Heart right ventricle (tissue), 16 donors: ENCODE measurements at regions of chr6 and their contacts with region 1.

Region 1: DNA sequence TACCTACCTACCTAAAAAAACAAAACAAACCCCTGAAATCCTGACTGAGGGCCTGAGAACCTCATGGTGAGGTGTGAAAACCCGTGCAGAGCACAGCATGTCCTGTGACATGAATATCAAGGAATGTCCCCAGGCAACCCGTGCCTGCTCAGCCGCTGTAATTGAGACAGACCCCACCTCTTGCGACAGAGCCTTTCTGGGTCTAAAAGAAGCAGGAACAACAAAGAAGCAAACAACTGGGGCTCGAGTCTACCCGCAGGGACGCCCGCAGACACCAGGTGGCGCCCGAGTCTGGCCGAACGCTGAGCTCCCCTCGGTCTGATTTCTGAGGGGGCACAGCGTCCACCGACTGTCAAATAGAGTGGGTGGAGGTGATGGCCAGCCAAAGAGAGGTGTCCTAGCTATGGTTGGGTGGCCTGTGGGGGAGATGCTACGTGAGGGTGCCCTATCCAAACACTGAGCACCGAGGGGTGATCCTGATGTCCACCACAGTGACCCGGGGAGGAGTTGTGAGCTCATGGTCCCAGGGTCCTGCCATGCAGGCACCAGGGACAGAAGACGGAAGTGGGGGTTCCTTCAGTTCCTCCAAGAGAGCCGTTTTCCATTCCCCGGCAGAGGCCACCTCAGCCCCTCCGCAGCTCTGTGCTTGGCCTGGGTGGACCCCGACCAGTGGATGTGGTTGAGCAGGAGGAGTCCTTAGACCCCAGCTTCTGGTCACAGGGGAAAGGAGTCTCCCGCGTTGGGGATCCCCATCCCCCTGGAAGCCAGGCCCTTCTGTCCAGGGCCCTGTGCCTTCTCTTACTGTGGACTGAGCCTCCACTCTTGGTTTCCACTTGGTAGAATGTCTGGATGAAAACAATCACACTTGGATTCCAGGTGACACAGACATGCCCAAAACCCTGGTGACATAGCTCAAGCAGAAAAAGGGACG is 268.2 kb downstream of the CDC5L start:
- DNase-seq: peak; percentile 60 to 74
- ATAC-seq: peak; percentile 54 to 87 (median 74)
- H3K4me3 ChIP-seq: no peak overlapping the region
- H3K27ac ChIP-seq: peak overlapping the region in 1 of 10 donors; percentile 43
- H3K4me1 ChIP-seq: peaks cover 0 to 8% (median 3%) of the 10 kb centered on the region in 9 donors
- H3K27me3 ChIP-seq: peaks cover 0 to 9% (median 0%) of the 10 kb centered on the region in 7 donors
- CTCF ChIP-seq: peak; percentile 76 to 98 (median 96)

Region 2: GRCh38 chr6:45714741-45715507 is 1059.2 kb after region 1 on chr6:
- intact Hi-C with region 1: loop called (anchors 1 to 5 kb)
- DNase-seq: peak in 1 of 2 donors; percentile 67
- ATAC-seq: peak; percentile 86 to 97 (median 93)
- H3K4me3 ChIP-seq: no peak overlapping the region
- H3K27ac ChIP-seq: no peak overlapping the region
- H3K4me1 ChIP-seq: peaks cover 0 to 16% (median 0%) of the 10 kb centered on the region in 9 donors
- H3K27me3 ChIP-seq: peaks cover 0 to 6% (median 3%) of the 10 kb centered on the region in 7 donors
- CTCF ChIP-seq: peak; percentile 65 to 92 (median 82)

Region 3: GRCh38 chr6:45916692-45917091 is 1261.0 kb after region 1 on chr6:
- intact Hi-C with region 1: loop called in 7 of 10 experiments (anchors 5 to 10 kb)
- DNase-seq: no peak
- ATAC-seq: peak; percentile 28 to 81 (median 56)
- H3K4me3 ChIP-seq: no peak overlapping the region
- H3K27ac ChIP-seq: peak overlapping the region in 7 of 10 donors; percentile 8 to 82 (median 51)
- H3K4me1 ChIP-seq: peaks cover 5 to 32% (median 19%) of the 10 kb centered on the region in 9 donors
- H3K27me3 ChIP-seq: no peaks in the 10 kb centered on the region
- CTCF ChIP-seq: no peak

Region 4: DNA sequence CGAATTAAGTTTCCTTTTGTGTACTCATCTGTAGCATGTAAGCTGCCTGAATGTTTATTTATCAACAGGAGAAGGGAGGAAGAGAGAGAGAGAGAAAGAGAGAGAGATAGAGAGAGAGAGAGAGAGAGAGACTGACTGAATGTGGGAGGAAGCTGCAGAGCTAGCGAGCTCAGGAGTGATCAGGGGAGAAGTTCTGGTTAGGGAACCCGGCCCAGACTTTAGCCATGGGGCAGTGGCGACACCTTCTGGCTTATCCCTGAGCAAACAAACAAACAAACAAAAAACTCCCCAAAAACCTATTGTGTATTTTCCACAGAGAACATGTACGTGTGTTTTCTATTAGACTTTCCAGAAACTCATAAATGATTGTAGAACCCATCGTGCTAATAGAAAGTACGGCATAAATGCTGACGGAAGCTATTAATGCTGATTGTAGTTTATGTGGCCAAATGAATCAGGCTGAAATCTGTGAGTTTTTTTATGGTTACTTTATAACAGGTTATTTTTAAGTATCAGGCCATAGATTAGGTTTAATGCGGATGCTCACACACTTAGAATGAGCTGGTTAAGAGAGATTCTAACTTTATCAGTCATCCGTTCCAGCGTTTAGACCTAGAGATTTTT is 1267.2 kb after region 1 on chr6:
- intact Hi-C with region 1: loop called in 8 of 10 experiments (anchors 1 to 10 kb)
- DNase-seq: peak; percentile 45 to 54
- ATAC-seq: peak; percentile 58 to 85 (median 76)
- H3K4me3 ChIP-seq: no peak overlapping the region
- H3K27ac ChIP-seq: peak overlapping the region in 3 of 10 donors; percentile 3 to 21 (median 9)
- H3K4me1 ChIP-seq: peaks cover 0 to 47% (median 41%) of the 10 kb centered on the region in 9 donors
- H3K27me3 ChIP-seq: no peaks in the 10 kb centered on the region
- CTCF ChIP-seq: peak; percentile 36 to 75 (median 67)